ENCODE measurements at regions of chr7 and their contacts with region 1.

Region 1: GRCh38 chr7:149414745-149415390 is 46.0 kb downstream of the ZNF777 start:
- ATAC-seq: peak in 7 of 8 experiments; percentile 43 to 91 (median 84)
- H3K4me3 ChIP-seq: peak overlapping the region in 2 of 5 donors; percentile 15 to 21
- H3K27ac ChIP-seq: no peak overlapping the region
- H3K4me1 ChIP-seq: no peaks in the 10 kb centered on the region

Region 2: DNA sequence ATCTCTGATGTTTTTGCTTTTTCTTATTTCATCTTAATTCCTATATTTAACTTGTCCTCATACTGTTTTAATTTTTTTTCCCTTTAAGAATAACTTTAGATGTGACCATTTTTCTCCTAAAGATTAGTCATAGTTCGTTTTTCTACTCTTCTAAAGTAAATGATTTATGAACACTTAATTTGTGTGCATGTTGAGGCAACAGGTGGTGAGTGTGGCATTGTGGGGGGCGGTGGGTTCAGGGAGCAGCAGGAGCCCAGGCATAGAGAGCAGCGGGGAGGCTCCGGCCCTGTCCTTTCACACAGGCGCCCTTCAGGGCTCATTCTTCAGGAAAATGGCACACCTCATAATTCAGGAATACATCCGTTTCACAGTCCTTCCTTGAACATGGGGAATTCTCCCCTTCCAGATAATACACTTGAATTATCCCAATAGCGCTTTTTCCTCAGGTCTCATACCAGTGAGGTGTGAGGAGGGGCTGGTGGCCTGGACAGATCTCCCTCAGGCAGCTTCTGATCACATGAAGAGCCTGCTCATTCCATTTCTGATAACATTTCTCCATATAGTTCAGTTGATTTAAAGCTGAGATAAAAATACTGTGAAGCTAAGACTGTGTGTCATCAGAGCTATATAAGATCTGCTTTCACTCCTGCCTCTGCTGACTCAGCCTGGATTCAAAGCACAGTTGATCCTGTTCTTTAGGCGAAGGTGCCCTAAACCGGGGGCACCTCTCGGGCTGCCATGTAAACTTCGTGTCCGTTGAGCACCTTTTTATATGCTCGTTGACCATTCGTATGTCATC is 675.9 kb before region 1 on chr7:
- in situ Hi-C with region 1: no loop called
- ATAC-seq: no peak
- H3K4me3 ChIP-seq: no peak overlapping the region
- H3K27ac ChIP-seq: no peak overlapping the region
- H3K4me1 ChIP-seq: no peaks in the 10 kb centered on the region

Region 3: DNA sequence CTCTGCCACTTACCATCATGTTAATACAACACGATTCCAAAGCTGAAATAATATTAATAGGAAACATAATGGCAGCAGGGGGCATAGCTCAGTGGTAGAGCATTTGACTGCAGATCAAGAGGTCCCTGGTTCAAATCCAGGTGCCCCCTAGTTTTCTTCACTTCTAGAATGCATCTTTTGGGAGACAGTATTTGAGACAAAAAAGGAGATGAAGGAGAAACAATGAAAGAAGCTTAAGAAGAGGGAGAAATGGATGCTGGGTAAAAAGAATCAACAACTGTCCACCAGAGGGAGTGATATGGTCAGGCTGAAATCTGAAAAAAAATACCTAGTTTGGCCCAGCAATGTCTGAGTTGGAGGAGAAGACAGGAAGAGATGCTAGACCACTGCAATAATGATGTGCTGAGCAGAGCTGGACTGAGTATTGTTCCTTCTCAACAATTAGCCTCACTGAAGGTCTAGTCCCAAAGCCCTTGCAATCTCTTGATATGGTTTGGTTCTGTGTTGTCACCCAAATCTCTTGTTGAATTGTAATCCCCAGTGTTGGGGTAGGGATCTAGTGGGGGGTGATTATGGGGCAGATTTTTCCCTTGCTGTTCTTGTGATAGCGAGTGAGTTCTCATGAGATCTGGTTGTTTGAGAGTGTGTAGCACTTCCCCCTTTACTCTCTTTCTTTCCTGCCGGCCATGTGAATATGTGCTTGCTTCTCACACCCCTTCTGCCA is 104.6 kb before region 1 on chr7:
- in situ Hi-C with region 1: loop called in 1 of 9 experiments (anchors 10 kb)
- ATAC-seq: peak in 5 of 8 experiments; percentile 32 to 96 (median 93)
- H3K4me3 ChIP-seq: no peak overlapping the region
- H3K27ac ChIP-seq: no peak overlapping the region
- H3K4me1 ChIP-seq: no peaks in the 10 kb centered on the region